Endothelial cell of umbilical vein (primary cell): ENCODE measurements at regions of chr15 and their contacts with region 1.

Region 1: DNA sequence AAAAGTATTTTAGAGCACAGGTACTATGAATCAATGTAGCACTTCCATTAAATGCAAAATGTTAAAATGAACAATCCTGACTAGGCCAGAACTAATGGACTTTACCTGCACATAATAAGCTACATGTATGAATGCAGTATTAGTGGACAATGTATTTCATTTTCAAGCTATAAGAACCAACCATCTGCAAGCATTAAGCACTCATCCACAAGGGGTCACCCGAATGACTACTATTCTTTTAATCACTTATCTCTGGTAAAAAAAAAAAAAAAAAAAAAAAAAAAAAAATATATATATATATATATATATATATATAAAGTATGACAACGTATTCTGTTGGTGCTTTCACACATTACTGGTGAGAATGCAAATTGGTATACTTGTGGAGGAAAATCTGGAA is 7.2 kb downstream of the HERC1 start:
- DNase-seq: peak; percentile 47
- H3K4me3 ChIP-seq: no peak overlapping the region
- H3K27ac ChIP-seq: no peak overlapping the region
- H3K4me1 ChIP-seq: peaks cover 4% of the 10 kb centered on the region
- H3K27me3 ChIP-seq: no peaks in the 10 kb centered on the region
- CTCF ChIP-seq: peak in 1 of 2 donors; percentile 10
- POLR2A ChIP-seq: no peak

Region 2: GRCh38 chr15:63794271-63794670 is 32.3 kb before region 1 on chr15:
- CTCF ChIA-PET with region 1: no interaction called
- POLR2A ChIA-PET with region 1: no interaction called
- dilution Hi-C with region 1: no loop called
- intact Hi-C with region 1: no loop called
- DNase-seq: no peak
- H3K4me3 ChIP-seq: no peak overlapping the region
- H3K27ac ChIP-seq: no peak overlapping the region
- H3K4me1 ChIP-seq: no peaks in the 10 kb centered on the region
- H3K27me3 ChIP-seq: no peaks in the 10 kb centered on the region
- CTCF ChIP-seq: no peak
- POLR2A ChIP-seq: no peak

Region 3: GRCh38 chr15:63986751-63987341 is 160.3 kb after region 1 on chr15:
- CTCF ChIA-PET with region 1: interaction called, 13 read pairs
- POLR2A ChIA-PET with region 1: no interaction called
- dilution Hi-C with region 1: no loop called
- intact Hi-C with region 1: no loop called
- DNase-seq: no peak
- H3K4me3 ChIP-seq: no peak overlapping the region
- H3K27ac ChIP-seq: no peak overlapping the region
- H3K4me1 ChIP-seq: peaks cover 3% of the 10 kb centered on the region
- H3K27me3 ChIP-seq: no peaks in the 10 kb centered on the region
- CTCF ChIP-seq: no peak
- POLR2A ChIP-seq: no peak